OCI-LY7 (cell line): ENCODE measurements at regions of chr3 and their contacts with region 1.

Region 1: GRCh38 chr3:112327371-112327951 is 5.5 kb upstream of the CD200 start:
- DNase-seq: peak; percentile 83
- H3K4me3 ChIP-seq: no peak overlapping the region
- H3K27ac ChIP-seq: no peak overlapping the region
- H3K4me1 ChIP-seq: peaks cover 6% of the 10 kb centered on the region
- CTCF ChIP-seq: peak; percentile 93

Region 2: DNA sequence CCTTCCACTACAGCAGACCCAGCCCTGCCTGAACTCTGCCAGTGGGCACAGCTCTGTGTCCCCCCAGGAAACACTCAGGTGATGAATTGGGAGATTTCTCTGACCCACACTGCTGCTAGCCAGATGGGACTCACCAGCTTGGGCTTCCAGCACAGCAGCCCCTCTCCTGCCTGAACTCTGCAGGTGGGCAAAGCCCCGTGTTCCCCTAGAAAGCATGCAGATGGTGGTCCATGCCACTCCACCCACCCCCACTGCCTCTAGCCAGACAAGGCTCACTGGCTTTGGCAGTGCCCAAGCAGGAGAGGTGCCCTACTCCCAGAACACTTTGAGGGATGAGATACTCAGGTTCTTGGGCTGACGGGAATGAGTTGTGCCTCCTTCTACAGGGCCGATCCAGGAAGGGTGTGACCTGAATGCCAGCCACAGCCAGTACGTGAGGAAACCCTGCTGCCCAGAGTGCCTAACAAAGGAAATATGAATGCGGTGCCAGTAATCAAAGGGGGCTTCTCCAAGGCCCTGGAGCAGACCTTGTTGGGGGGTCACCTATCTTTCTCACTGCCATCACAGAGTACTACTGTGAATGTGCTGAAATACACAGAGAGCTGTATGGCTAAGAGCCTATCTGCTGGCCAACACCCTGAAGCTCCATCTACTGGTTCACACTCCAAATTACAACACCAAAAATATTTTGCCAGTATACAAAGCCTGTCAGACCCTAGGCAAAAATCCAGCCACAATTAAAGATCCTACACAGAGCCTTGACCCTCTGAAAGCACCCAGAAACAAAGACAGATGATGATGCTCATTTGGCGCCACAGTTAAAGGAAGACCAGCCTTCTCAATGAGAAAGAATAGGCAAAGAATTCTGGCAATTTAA is 109.9 kb after region 1 on chr3:
- CTCF ChIA-PET with region 1: no interaction called
- POLR2A ChIA-PET with region 1: no interaction called
- intact Hi-C with region 1: loop called (anchors 2 kb)
- DNase-seq: peak; percentile 77
- H3K4me3 ChIP-seq: no peak overlapping the region
- H3K27ac ChIP-seq: no peak overlapping the region
- H3K4me1 ChIP-seq: peaks cover 3% of the 10 kb centered on the region
- CTCF ChIP-seq: peak; percentile 82